HepG2 (cell line): ENCODE measurements at regions of chr13 and their contacts with region 1.

Region 1: GRCh38 chr13:21603531-21604448 is at the start of gene MICU2:
- DNase-seq: peak; percentile 89
- ATAC-seq: peak; percentile 99
- H3K4me3 ChIP-seq: peak within 1 kb of the TSS; percentile 80 to 82 (median 80)
- H3K27ac ChIP-seq: peak within 1 kb of the TSS; percentile 91
- H3K4me1 ChIP-seq: peaks cover 20% of the 10 kb centered on the region
- H3K27me3 ChIP-seq: peaks cover 0 to 3% of the 10 kb centered on the region in 2 experiments; a peak in 1 of 5 replicates
- CTCF ChIP-seq: peak; percentile 24
- EP300 ChIP-seq: no peak
- POLR2A ChIP-seq: peak; percentile 95 to 96
- RAD21 ChIP-seq: peak; percentile 57
- total RNA-seq, gene MICU2: 42.4 and 56.5 TPM in 2 replicates

Region 2: DNA sequence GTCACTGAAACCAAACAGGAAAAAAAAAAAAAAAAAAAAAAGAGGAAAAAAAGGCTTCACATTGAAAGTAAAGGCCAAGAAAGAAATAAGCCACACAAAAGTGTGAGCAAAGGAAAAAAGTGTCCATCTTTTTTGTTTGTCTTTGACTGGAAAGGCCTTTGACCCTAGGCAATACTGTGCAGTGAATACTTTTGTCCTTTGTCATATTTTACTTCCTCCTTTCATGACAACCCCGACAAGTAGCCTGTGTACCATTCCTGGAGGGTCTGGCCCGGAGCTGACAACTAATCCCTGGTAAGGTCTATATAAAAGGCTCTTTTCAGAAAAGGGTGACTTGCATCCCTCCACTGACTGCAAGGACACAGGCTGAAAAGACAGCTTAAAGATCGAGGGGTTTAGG is 13.1 kb after region 1 on chr13:
- CTCF ChIA-PET with region 1: no interaction called
- POLR2A ChIA-PET with region 1: interaction called, 43 read pairs
- in situ Hi-C with region 1: no loop called
- intact Hi-C with region 1: loop called (anchors 2 kb)
- DNase-seq: peak; percentile 90
- ATAC-seq: peak; percentile 99
- H3K4me3 ChIP-seq: peak overlapping the region in 2 of 3 experiments; percentile 45 to 46; a peak in 3 of 6 replicates
- H3K27ac ChIP-seq: peak overlapping the region; percentile 49
- H3K4me1 ChIP-seq: peaks cover 50% of the 10 kb centered on the region
- H3K27me3 ChIP-seq: no peaks in the 10 kb centered on the region
- CTCF ChIP-seq: no peak
- EP300 ChIP-seq: peak in 1 of 2 experiments; percentile 43; a peak in 1 of 4 replicates
- POLR2A ChIP-seq: peak in 1 of 2 experiments; percentile 23; a peak in 1 of 4 replicates
- RAD21 ChIP-seq: no peak

Region 3: GRCh38 chr13:21638319-21639282 is 34.8 kb after region 1 on chr13:
- CTCF ChIA-PET with region 1: no interaction called
- POLR2A ChIA-PET with region 1: no interaction called
- in situ Hi-C with region 1: no loop called
- intact Hi-C with region 1: no loop called
- DNase-seq: no peak
- ATAC-seq: peak; percentile 38; the same call in 1 of the 3 replicates
- H3K4me3 ChIP-seq: no peak overlapping the region
- H3K27ac ChIP-seq: no peak overlapping the region
- H3K4me1 ChIP-seq: peaks cover 21% of the 10 kb centered on the region
- H3K27me3 ChIP-seq: no peaks in the 10 kb centered on the region
- CTCF ChIP-seq: peak; percentile 65
- EP300 ChIP-seq: no peak
- POLR2A ChIP-seq: no peak
- RAD21 ChIP-seq: no peak